Activated CD8-positive, alpha-beta memory T cell treated with anti-CD3 and anti-CD28 coated beads, Interleukin-2, amount 10 ng/mL, durations not matched to agents 7 days and 5 days (primary cell): ENCODE measurements at regions of chr2 and their contacts with region 1.

Region 1: GRCh38 chr2:174577967-174578589 is 19.5 kb downstream of the WIPF1 start:
- DNase-seq: peak; percentile 74
- ATAC-seq: peak; percentile 65
- H3K4me3 Mint-ChIP-seq: no peak overlapping the region
- H3K27ac Mint-ChIP-seq: peak overlapping the region; percentile 26
- H3K4me1 Mint-ChIP-seq: peaks cover 76% of the 10 kb centered on the region
- H3K27me3 Mint-ChIP-seq: no peaks in the 10 kb centered on the region

Region 2: DNA sequence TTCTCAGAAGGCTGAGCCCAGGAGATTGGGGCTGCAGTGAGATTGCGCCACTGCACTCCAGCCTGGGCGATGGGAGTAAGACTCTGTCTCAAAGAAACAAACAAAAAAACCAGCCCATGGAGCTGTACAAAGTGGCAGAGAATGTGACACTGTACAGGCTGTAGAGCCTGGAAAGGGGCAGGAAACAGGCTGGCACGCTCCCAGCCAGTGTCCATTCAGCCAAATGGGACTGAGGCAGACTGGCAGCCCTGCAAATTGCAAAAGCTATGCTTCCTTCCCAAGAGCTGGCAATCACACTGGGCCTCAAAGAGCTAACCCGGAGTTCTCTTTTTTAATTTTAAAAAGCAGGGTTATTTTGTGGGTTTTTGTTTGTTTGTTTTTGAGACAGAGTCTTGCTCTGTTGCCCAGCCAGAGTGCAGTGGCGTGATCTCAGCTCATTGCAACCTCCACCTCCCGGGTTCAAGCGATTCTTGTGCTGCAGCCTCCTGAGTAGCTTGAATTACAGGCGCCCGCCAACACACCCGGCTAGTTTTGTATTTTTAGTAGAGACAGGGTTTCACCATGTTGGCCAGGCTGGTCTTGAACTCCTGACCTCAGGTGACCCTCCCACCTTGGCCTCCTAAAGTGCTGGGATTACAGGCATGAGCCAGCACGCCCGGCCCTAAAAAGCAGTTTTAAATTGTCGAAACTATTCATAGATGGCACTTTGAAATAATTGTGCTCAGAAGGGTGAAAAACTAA is 139.8 kb before region 1 on chr2:
- CTCF ChIA-PET with region 1: no interaction called
- DNase-seq: no peak
- ATAC-seq: no peak
- H3K4me3 Mint-ChIP-seq: no peak overlapping the region
- H3K27ac Mint-ChIP-seq: no peak overlapping the region
- H3K4me1 Mint-ChIP-seq: no peaks in the 10 kb centered on the region
- H3K27me3 Mint-ChIP-seq: no peaks in the 10 kb centered on the region

Region 3: GRCh38 chr2:174561283-174561971 is 16.7 kb before region 1 on chr2:
- CTCF ChIA-PET with region 1: interaction called, 10 read pairs
- DNase-seq: peak; percentile 16
- ATAC-seq: no peak
- H3K4me3 Mint-ChIP-seq: no peak overlapping the region
- H3K27ac Mint-ChIP-seq: peak overlapping the region; percentile 65
- H3K4me1 Mint-ChIP-seq: peaks cover 12% of the 10 kb centered on the region
- H3K27me3 Mint-ChIP-seq: no peaks in the 10 kb centered on the region

Region 4: DNA sequence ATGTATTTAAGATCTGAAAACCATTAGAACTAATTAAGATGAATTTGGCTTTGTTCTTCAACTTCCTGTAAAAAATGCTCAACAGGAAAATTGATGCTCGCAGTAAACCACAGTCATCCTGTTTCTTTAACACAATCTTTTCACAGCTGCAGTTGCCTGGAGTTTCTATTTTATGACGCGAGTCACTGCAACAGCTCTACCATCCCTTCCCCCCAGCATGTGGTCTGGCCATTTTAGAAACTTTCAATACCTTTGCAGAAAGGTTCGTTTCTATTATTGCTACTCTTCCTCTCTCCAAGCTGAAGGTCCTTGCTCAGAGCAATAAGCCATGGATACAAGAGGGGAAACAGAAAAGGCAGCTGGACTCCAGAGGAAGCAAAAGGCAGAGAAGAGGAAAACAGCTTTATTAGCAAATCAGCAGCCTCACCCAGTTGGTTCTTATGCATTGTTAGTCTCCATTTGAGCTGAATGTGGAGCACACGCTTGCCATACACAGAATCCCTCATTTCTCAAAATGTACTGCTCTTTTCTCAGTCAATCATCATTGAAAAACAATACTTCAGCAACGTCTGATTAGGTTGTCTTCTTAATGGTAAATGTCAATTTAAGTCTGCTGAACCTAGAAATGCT is 15.6 kb after region 1 on chr2:
- CTCF ChIA-PET with region 1: interaction called, 40 read pairs
- DNase-seq: peak; percentile 88
- ATAC-seq: peak; percentile 74
- H3K4me3 Mint-ChIP-seq: peak overlapping the region; percentile 91
- H3K27ac Mint-ChIP-seq: peak overlapping the region; percentile 95
- H3K4me1 Mint-ChIP-seq: peaks cover 48% of the 10 kb centered on the region
- H3K27me3 Mint-ChIP-seq: no peaks in the 10 kb centered on the region

Region 5: GRCh38 chr2:174603280-174603679 is 25.2 kb after region 1 on chr2:
- CTCF ChIA-PET with region 1: interaction called, 18 read pairs
- DNase-seq: peak; percentile 74
- ATAC-seq: peak; percentile 70
- H3K4me3 Mint-ChIP-seq: no peak overlapping the region
- H3K27ac Mint-ChIP-seq: peak overlapping the region; percentile 66
- H3K4me1 Mint-ChIP-seq: peaks cover 89% of the 10 kb centered on the region
- H3K27me3 Mint-ChIP-seq: no peaks in the 10 kb centered on the region

Region 6: DNA sequence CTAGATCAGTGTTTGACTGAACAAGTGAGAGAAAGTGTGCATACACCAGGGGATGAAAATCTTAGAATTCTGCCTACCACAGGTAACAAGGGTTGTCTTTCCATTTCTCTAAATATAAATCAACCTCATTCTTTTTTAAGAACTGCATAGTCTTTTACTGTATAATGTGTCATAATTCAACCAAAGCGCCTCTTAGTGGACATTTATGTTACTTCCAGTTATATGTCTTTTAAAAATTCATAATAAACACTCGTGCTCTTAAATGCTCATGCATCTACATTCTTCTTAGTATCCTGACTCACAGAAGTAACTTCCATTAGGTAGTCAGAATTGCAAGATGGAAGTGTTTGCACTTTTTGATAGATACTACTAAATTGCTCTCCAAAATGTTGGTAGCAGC is 110.0 kb after region 1 on chr2:
- CTCF ChIA-PET with region 1: interaction called, 37 read pairs
- DNase-seq: no peak
- ATAC-seq: peak; percentile 54
- H3K4me3 Mint-ChIP-seq: no peak overlapping the region
- H3K27ac Mint-ChIP-seq: no peak overlapping the region
- H3K4me1 Mint-ChIP-seq: peaks cover 38% of the 10 kb centered on the region
- H3K27me3 Mint-ChIP-seq: no peaks in the 10 kb centered on the region